Activated CD4-positive, alpha-beta memory T cell treated with anti-CD3 and anti-CD28 coated beads, Interleukin-2, amount 10 ng/mL, durations not matched to agents 7 days and 5 days (primary cell): ENCODE measurements at regions of chr5 and their contacts with region 1.

Region 1: GRCh38 chr5:140145818-140146522 is 20.2 kb downstream of the IGIP start:
- DNase-seq: peak; percentile 59
- H3K4me3 Mint-ChIP-seq: no peak overlapping the region
- H3K27ac Mint-ChIP-seq: no peak overlapping the region
- H3K4me1 Mint-ChIP-seq: peaks cover 18% of the 10 kb centered on the region
- H3K27me3 Mint-ChIP-seq: peaks cover 24% of the 10 kb centered on the region

Region 2: GRCh38 chr5:139863855-139864558 is 282.0 kb before region 1 on chr5:
- CTCF ChIA-PET with region 1: no interaction called
- POLR2A ChIA-PET with region 1: no interaction called
- DNase-seq: peak; percentile 54
- H3K4me3 Mint-ChIP-seq: no peak overlapping the region
- H3K27ac Mint-ChIP-seq: no peak overlapping the region
- H3K4me1 Mint-ChIP-seq: no peaks in the 10 kb centered on the region
- H3K27me3 Mint-ChIP-seq: peaks cover 13% of the 10 kb centered on the region

Region 3: GRCh38 chr5:139960723-139961383 is 185.1 kb before region 1 on chr5:
- CTCF ChIA-PET with region 1: no interaction called
- POLR2A ChIA-PET with region 1: no interaction called
- DNase-seq: no peak
- H3K4me3 Mint-ChIP-seq: no peak overlapping the region
- H3K27ac Mint-ChIP-seq: no peak overlapping the region
- H3K4me1 Mint-ChIP-seq: no peaks in the 10 kb centered on the region
- H3K27me3 Mint-ChIP-seq: peaks cover 2% of the 10 kb centered on the region

Region 4: GRCh38 chr5:140073296-140073695 is 72.7 kb before region 1 on chr5:
- CTCF ChIA-PET with region 1: interaction called, 76 read pairs
- POLR2A ChIA-PET with region 1: no interaction called
- DNase-seq: no peak
- H3K4me3 Mint-ChIP-seq: no peak overlapping the region
- H3K27ac Mint-ChIP-seq: no peak overlapping the region
- H3K4me1 Mint-ChIP-seq: peaks cover 2% of the 10 kb centered on the region
- H3K27me3 Mint-ChIP-seq: peaks cover 24% of the 10 kb centered on the region

Region 5: GRCh38 chr5:140107312-140108083 is 38.5 kb before region 1 on chr5:
- CTCF ChIA-PET with region 1: interaction called, 44 read pairs
- POLR2A ChIA-PET with region 1: interaction called, 9 read pairs
- DNase-seq: peak; percentile 95
- H3K4me3 Mint-ChIP-seq: peak overlapping the region; percentile 90
- H3K27ac Mint-ChIP-seq: peak overlapping the region; percentile 99
- H3K4me1 Mint-ChIP-seq: peaks cover 39% of the 10 kb centered on the region
- H3K27me3 Mint-ChIP-seq: peaks cover 33% of the 10 kb centered on the region

Region 6: GRCh38 chr5:140113699-140114263 is 32.2 kb before region 1 on chr5 and contains the start of gene PURA:
- CTCF ChIA-PET with region 1: interaction called, 63 read pairs
- POLR2A ChIA-PET with region 1: interaction called, 5 read pairs
- DNase-seq: peak; percentile 97
- H3K4me3 Mint-ChIP-seq: peak within 1 kb of the TSS; percentile 88
- H3K27ac Mint-ChIP-seq: peak within 1 kb of the TSS; percentile 90
- H3K4me1 Mint-ChIP-seq: peaks cover 68% of the 10 kb centered on the region
- H3K27me3 Mint-ChIP-seq: peaks cover 15% of the 10 kb centered on the region
- total RNA-seq, gene PURA: 14.7 to 15.1 TPM

Region 7: DNA sequence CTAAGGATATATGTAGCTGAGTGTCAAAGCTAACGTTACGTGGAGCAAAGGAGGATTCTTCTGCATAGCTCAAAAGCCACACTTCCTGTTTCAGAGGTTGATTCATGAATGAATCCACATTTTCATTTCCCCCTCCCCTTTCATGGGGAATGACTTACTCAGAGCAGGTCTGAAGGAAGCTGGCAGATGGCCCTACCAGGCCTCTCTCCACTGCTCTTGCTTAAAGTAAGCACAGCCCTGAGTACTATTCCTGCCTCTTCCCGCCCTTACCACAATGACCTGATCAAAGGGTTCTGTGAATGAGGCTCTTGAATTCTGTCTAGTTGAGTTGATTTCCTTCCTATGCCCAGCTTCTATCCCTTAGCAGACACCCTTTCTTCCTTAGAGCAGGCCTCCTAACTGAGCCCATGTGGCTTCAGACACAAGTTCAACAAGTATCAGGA is 14.0 kb before region 1 on chr5:
- CTCF ChIA-PET with region 1: interaction called, 59 read pairs
- POLR2A ChIA-PET with region 1: no interaction called
- DNase-seq: no peak
- H3K4me3 Mint-ChIP-seq: no peak overlapping the region
- H3K27ac Mint-ChIP-seq: no peak overlapping the region
- H3K4me1 Mint-ChIP-seq: peaks cover 22% of the 10 kb centered on the region
- H3K27me3 Mint-ChIP-seq: no peaks in the 10 kb centered on the region

Region 8: DNA sequence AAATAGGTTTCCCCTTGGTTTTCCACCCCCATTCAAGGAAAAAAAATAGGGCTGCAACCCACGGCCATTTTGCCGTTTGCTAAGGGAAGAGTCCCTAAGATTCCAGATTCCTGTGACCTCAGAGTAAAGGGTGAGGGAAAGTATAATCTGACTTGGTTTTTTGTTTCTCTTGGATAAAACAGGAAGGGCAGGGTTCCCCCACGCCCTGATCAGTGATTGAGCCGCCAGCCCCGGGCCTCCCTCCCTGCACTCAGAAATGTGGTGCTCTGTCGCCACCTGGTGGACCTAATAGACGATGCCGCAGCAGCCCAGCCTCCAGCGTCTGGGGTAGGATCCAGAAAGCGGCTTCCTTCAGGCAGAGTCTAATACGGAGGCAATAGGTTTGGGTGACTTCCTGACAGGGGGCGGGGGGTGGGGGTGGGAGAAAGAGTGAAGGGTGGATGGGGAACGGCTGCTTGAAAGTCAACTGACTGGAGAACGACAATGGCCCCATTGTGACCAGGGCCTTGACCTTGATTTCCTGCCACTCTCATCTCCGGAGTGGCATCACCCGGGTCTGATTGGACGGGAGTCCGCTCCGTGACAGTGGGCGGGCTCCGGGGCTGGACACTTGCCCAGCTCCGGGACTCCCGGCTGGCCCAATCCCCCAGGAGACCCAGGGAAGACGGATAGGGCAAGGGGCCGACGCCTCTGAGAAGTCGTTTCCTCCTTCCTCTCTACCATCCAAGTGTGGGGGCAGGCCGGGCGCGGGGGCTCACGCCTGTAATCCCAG is 11.2 kb after region 1 on chr5:
- CTCF ChIA-PET with region 1: interaction called, 11 read pairs
- POLR2A ChIA-PET with region 1: no interaction called
- DNase-seq: peak; percentile 88
- H3K4me3 Mint-ChIP-seq: peak overlapping the region; percentile 50
- H3K27ac Mint-ChIP-seq: peak overlapping the region; percentile 8
- H3K4me1 Mint-ChIP-seq: peaks cover 9% of the 10 kb centered on the region
- H3K27me3 Mint-ChIP-seq: no peaks in the 10 kb centered on the region